ENCODE measurements at regions of chr2 and their contacts with region 1.

Region 1: DNA sequence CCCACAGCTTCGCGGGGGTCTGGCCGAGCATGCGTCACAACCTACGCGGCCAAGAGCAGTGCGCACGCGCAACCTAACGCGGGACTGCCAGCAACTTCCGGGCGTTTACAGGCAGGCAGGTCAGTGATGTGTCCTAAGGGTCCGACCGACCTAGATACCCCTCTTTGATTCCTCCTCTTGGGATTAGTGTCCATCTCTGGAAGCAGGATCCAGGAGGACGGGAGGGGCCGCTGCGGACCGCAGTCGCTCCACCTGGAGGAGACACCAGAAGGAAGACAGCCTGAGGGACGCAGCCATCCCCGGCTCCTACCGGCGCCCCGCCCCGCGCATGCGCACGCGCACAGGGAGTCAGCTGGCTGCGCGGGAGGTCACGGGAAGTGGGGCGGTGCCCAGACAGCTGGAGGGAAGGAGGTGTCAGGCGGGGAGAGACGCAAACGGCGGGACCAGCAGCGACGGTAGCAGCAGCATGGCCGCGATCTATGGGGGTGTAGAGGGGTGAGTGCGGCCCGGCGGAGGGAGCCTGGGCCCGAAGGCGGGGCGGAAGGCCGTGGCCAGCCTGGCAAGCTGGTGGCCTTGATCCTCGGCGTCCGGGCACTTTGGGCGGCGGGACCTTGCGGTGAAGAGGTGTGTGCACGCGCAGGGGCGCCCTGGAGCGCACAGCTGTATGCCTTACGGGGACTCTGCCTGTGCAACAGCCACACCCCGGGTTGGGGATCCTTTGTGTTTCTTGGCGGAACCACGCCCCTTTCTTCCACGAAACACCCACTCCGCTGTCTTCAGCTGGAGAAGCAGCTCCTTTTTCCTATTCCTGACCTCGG is at the start of gene NAGK:
- DNase-seq: peak; percentile 96 to 98
- ATAC-seq: peak; percentile 88 to 93
- H3K4me3 ChIP-seq: peak within 1 kb of the TSS; percentile 81
- H3K27ac ChIP-seq: peak within 1 kb of the TSS; percentile 86 to 92
- H3K4me1 ChIP-seq: peaks cover 12% of the 10 kb centered on the region; the same call in 2 of the 3 replicates
- CTCF ChIP-seq: no peak
- EP300 ChIP-seq: 0 out of 5 replicates have a peak, but pooled peaks of 1 of the 2 experiments have one; percentile 40
- POLR2A ChIP-seq: peak; percentile 95
- RAD21 ChIP-seq: no peak
- polyA plus RNA-seq, gene NAGK: 41.2 and 42.2 TPM in 2 replicates

Region 2: GRCh38 chr2:70887550-70888246 is 180.7 kb before region 1 on chr2:
- CTCF ChIA-PET with region 1: no interaction called
- POLR2A ChIA-PET with region 1: no interaction called
- DNase-seq: peak; percentile 36 to 74
- ATAC-seq: peak; percentile 75 to 85
- H3K4me3 ChIP-seq: peak overlapping the region; percentile 61
- H3K27ac ChIP-seq: peak overlapping the region; percentile 78 to 92
- H3K4me1 ChIP-seq: peaks cover 11% of the 10 kb centered on the region; the same call in 2 of the 3 replicates
- CTCF ChIP-seq: no peak
- EP300 ChIP-seq: no peak
- POLR2A ChIP-seq: peak; percentile 78
- RAD21 ChIP-seq: no peak

Region 3: GRCh38 chr2:71000780-71001591 is 67.4 kb before region 1 on chr2:
- CTCF ChIA-PET with region 1: interaction called, 18 read pairs
- POLR2A ChIA-PET with region 1: interaction called, 9 read pairs
- DNase-seq: peak; percentile 59 to 80
- ATAC-seq: peak; percentile 86 to 93
- H3K4me3 ChIP-seq: peak overlapping the region; percentile 42
- H3K27ac ChIP-seq: peak overlapping the region; percentile 64 to 83
- H3K4me1 ChIP-seq: peaks cover 5% of the 10 kb centered on the region; the same call in 1 of the 3 replicates
- CTCF ChIP-seq: peak; percentile 94
- EP300 ChIP-seq: no peak
- POLR2A ChIP-seq: peak; percentile 25; the same call in 1 of the 2 replicates
- RAD21 ChIP-seq: peak; percentile 41 to 43; a peak in 4 of 5 replicates

Region 4: GRCh38 chr2:71006955-71007799 is 61.2 kb before region 1 on chr2:
- CTCF ChIA-PET with region 1: interaction called, 18 read pairs
- POLR2A ChIA-PET with region 1: interaction called, 10 read pairs
- DNase-seq: peak in 1 of 2 experiments; percentile 29
- ATAC-seq: peak; percentile 79 to 87
- H3K4me3 ChIP-seq: no peak overlapping the region
- H3K27ac ChIP-seq: no peak overlapping the region
- H3K4me1 ChIP-seq: no peaks in the 10 kb centered on the region
- CTCF ChIP-seq: no peak
- EP300 ChIP-seq: no peak
- POLR2A ChIP-seq: no peak
- RAD21 ChIP-seq: no peak

Region 5: GRCh38 chr2:71082402-71083252 is 14.2 kb after region 1 on chr2:
- CTCF ChIA-PET with region 1: interaction called, 5 read pairs
- POLR2A ChIA-PET with region 1: interaction called, 19 read pairs
- DNase-seq: no peak
- ATAC-seq: no peak
- H3K4me3 ChIP-seq: no peak overlapping the region
- H3K27ac ChIP-seq: no peak overlapping the region
- H3K4me1 ChIP-seq: no peaks in the 10 kb centered on the region
- CTCF ChIP-seq: no peak
- EP300 ChIP-seq: no peak
- POLR2A ChIP-seq: no peak
- RAD21 ChIP-seq: no peak

Region 6: GRCh38 chr2:71100195-71100964 is 32.0 kb after region 1 on chr2:
- CTCF ChIA-PET with region 1: interaction called, 5 read pairs
- POLR2A ChIA-PET with region 1: interaction called, 27 read pairs
- DNase-seq: peak; percentile 74 to 83
- ATAC-seq: peak; percentile 92 to 97
- H3K4me3 ChIP-seq: no peak overlapping the region
- H3K27ac ChIP-seq: no peak overlapping the region
- H3K4me1 ChIP-seq: no peaks in the 10 kb centered on the region
- CTCF ChIP-seq: peak; percentile 78
- EP300 ChIP-seq: no peak
- POLR2A ChIP-seq: no peak
- RAD21 ChIP-seq: peak; percentile 56 to 71; a peak in 4 of 5 replicates

Region 7: GRCh38 chr2:71130113-71130904 is 61.9 kb after region 1 on chr2 and contains the starts of genes MCEE and MPHOSPH10:
- CTCF ChIA-PET with region 1: no interaction called
- POLR2A ChIA-PET with region 1: interaction called, 35 read pairs
- DNase-seq: peak; percentile 86 to 94
- ATAC-seq: peak; percentile 97 to 99
- H3K4me3 ChIP-seq: peak within 1 kb of the TSS; percentile 83
- H3K27ac ChIP-seq: peak within 1 kb of the TSS; percentile 88 to 92
- H3K4me1 ChIP-seq: peaks cover 20% of the 10 kb centered on the region; the same call in 2 of the 3 replicates
- CTCF ChIP-seq: no peak
- EP300 ChIP-seq: no peak
- POLR2A ChIP-seq: peak; percentile 94
- RAD21 ChIP-seq: no peak
- polyA plus RNA-seq, gene MCEE: 15.8 and 17.7 TPM in 2 replicates
- polyA plus RNA-seq, gene MPHOSPH10: 25.9 and 51.7 TPM in 2 replicates

Region 8: DNA sequence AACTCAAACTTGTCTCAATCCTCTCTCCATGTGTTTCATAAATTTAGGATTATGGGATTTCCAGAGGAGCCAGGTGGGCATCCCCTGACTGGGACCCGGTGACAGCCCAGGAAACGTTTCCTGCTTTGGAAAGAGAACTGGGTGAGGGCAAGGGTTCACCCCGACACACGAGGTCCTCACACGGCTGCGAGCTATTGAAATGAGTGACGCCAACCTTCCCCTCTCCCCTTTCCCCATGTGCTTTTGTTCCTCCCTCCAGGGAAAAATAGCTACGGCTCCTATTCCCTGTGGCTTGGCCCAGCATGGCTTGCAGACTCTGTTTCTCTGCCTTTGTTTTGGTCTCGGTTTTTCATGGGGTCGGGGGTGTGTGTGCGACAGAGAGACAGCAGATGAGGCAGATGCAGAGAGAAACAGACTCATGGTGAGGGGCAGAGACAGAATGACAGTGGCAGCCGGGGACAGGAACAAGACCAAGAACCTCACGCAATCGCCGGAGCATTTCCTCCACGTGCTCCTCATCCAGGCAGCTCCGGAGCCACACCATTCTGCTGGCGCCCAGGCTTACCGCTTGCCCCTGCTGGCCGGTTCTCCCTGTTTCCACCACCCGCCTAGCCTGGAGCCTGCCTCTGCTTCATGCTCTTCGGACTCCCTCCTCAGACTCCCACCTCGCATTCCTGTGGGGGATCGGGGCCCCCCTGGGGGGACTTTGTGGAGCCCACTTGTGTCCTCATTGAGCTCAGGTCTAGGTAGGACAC is 623.5 kb after region 1 on chr2:
- CTCF ChIA-PET with region 1: no interaction called
- POLR2A ChIA-PET with region 1: no interaction called
- DNase-seq: no peak
- ATAC-seq: peak in 1 of 2 experiments; percentile 54; a peak in 3 of 6 replicates
- H3K4me3 ChIP-seq: no peak overlapping the region
- H3K27ac ChIP-seq: no peak overlapping the region
- H3K4me1 ChIP-seq: no peaks in the 10 kb centered on the region
- CTCF ChIP-seq: no peak
- EP300 ChIP-seq: no peak
- POLR2A ChIP-seq: no peak
- RAD21 ChIP-seq: no peak

Measured in A549 (cell line).